ENCODE measurements at regions of chr14 and their contacts with region 1.

Region 1: DNA sequence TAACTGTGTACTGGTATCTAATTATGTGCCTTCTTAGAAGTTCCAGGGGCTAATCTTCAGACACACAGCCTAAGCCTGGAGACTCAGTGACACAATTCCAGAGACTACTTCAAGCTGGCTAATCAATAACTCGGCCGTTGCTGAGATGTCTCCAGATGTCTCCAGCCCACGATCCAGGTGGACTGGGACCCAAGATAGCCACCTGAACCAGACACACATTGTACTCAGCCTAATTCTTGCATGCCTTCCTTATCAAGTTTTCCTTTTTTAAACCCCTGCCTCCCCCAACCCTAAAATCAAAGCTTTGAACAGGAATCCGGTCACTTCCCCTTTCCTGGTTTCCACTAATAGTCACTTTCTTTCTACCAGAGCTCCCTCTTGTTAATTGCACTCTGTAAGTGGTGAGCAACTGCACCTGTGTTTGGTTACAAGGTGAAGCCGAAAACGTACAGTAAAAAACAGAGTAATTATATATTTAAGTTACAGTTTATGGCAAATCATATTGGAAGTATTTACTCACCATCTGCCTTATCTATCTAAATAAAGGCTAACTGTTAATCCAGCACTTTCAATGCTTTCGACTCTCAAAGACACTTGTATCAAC is 39.8 kb upstream of the PTGDR start:
- DNase-seq: no peak
- H3K4me3 ChIP-seq: no peak overlapping the region
- H3K27ac ChIP-seq: no peak overlapping the region
- H3K4me1 ChIP-seq: no peaks in the 10 kb centered on the region
- H3K27me3 ChIP-seq: no peaks in the 10 kb centered on the region
- CTCF ChIP-seq: no peak

Region 2: GRCh38 chr14:52254086-52254485 is 26.4 kb after region 1 on chr14:
- intact Hi-C with region 1: loop called (anchors 2 kb)
- DNase-seq: no peak
- H3K4me3 ChIP-seq: no peak overlapping the region
- H3K27ac ChIP-seq: no peak overlapping the region
- H3K4me1 ChIP-seq: no peaks in the 10 kb centered on the region
- H3K27me3 ChIP-seq: no peaks in the 10 kb centered on the region
- CTCF ChIP-seq: no peak

Region 3: DNA sequence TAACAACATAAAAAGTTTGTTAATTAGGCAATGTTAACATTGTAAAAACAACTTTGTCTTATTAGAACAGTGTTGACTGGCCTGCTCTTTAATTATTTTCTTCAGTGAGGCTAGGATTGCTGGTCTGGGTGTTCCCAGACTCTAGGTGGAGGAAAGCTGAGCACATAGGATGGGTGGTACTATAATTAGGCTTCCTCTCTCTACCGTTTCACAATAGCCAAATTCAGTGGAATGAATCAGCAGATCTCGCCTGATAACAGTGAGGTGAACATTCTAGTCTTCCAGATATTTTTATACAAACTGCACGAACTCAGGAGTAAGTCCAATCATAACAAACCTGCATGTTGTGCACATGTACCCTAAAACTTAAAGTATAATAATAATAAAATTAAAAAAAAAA is 51.7 kb after region 1 on chr14:
- intact Hi-C with region 1: no loop called
- DNase-seq: no peak
- H3K4me3 ChIP-seq: no peak overlapping the region
- H3K27ac ChIP-seq: peak overlapping the region; percentile 68
- H3K4me1 ChIP-seq: peaks cover 7% of the 10 kb centered on the region
- H3K27me3 ChIP-seq: no peaks in the 10 kb centered on the region
- CTCF ChIP-seq: no peak

Measured in left ventricle myocardium inferior (tissue), 1 donor.